ENCODE measurements at regions of chr3 and their contacts with region 1.

Region 1: DNA sequence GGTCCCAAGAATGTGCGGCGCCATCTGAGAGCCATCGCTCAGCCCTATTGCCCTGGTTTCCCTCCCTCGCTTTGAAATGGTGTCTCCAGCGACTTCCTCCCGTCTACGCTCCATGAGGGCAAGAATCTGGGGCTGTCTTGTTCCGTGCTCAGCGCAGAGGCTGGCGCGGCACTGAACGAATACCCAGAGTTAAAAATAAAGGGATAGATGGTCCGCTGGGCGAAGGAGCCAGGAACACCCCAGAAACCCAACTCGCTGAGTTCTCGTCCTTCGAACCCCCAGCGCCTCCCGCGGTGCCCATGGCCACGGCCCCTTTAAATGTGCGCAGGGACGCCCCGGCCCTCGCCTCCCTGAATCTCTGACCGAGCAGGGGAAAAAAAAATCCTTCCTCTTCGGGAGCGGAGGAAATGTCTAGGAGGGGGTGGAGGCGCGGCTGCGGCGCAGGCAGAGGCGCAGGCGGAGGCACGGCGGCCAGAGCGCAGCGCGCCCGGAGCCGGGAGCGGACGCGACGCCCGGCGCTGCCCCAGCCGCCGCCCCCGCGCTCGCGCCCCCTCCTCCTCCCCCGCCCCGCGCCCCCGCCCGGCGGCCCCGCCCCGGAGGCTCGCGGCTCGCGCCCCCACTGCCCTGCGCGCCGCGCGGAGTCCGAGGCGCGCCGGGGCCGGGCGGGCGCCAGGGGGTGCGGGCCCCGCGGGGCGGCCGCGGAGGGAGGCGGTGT is 8.5 kb upstream of the FGD5 start:
- DNase-seq: peak; percentile 81
- H3K4me3 ChIP-seq: peak overlapping the region; percentile 36 to 87 (median 77)
- H3K27ac ChIP-seq: peak overlapping the region; percentile 61
- H3K4me1 ChIP-seq: peaks cover 50% of the 10 kb centered on the region
- H3K27me3 ChIP-seq: no peaks in the 10 kb centered on the region
- CTCF ChIP-seq: no peak
- POLR2A ChIP-seq: no peak

Region 2: DNA sequence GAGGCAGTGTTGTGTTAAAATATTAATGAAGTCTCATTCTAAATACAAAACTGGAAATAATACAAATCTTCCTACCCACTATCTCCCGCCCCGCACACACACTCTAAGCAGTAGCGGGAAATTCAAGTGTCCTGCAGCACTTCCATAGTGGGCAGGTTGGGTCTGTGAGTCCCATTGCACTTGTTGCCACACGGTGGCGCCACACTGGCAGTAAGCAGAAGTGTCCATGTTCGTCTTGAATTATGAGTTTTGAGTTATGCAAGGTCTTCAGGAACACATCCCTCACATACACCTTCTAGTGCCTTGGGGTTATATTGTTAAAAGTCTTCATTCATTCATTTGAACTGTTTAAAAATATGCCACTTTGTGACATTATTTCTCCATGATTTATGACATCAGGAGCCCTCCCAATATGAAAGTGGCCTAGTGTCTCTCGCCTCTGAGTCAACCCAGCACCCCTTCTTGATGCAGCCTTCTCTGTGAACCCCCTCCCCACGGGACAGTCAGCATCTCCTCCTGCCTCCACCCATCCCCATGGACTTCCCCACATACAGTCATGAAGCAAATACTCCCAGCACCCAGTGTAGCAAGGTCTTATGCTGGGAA is 176.3 kb before region 1 on chr3:
- CTCF ChIA-PET with region 1: no interaction called
- POLR2A ChIA-PET with region 1: no interaction called
- dilution Hi-C with region 1: no loop called
- intact Hi-C with region 1: no loop called
- DNase-seq: peak; percentile 53
- H3K4me3 ChIP-seq: no peak overlapping the region
- H3K27ac ChIP-seq: peak overlapping the region; percentile 54
- H3K4me1 ChIP-seq: peaks cover 15% of the 10 kb centered on the region
- H3K27me3 ChIP-seq: peaks cover 0 to 2% of the 10 kb centered on the region in 2 experiments
- CTCF ChIP-seq: peak; percentile 76 to 83
- POLR2A ChIP-seq: no peak

Region 3: GRCh38 chr3:14822670-14823390 is 12.6 kb after region 1 on chr3:
- CTCF ChIA-PET with region 1: interaction called, 5 read pairs
- POLR2A ChIA-PET with region 1: no interaction called
- dilution Hi-C with region 1: no loop called
- intact Hi-C with region 1: loop called (anchors 1 kb)
- DNase-seq: peak; percentile 32
- H3K4me3 ChIP-seq: no peak overlapping the region
- H3K27ac ChIP-seq: peak overlapping the region; percentile 14
- H3K4me1 ChIP-seq: peaks cover 26% of the 10 kb centered on the region
- H3K27me3 ChIP-seq: no peaks in the 10 kb centered on the region
- CTCF ChIP-seq: no peak
- POLR2A ChIP-seq: no peak

Region 4: DNA sequence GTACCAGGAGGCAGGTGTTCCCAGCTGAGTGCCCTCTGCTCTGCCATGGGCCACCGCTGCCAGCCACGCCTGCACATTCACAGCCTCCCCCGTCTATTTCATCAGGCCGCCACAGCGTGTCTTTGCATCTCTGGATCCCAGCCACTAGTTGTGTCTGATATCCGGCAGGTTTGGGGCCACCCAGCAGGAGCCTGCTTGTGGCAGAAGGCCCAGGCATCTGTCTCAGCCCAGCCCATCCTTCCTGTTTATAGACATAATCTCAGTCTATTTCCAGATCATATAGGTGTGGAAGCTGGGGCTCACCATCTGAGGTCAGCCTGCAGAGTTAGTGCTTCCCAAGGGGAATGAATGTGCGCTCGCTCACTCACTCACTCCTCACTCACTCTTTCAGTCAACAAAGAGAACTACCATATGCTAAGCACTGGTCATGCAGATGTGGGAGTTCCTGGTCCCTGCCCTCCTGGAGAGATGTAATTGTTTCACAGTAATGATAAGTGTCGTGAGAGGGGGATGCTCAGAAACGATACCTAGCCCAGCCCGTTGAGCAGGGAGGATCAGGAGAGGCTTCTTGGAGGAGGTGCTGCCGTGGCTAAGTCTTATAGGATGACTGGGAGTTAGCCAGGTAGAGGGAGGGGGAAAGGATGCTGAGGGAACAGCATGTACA is 69.1 kb after region 1 on chr3:
- CTCF ChIA-PET with region 1: no interaction called
- POLR2A ChIA-PET with region 1: no interaction called
- dilution Hi-C with region 1: no loop called
- intact Hi-C with region 1: loop called (anchors 2 kb)
- DNase-seq: no peak
- H3K4me3 ChIP-seq: no peak overlapping the region
- H3K27ac ChIP-seq: no peak overlapping the region
- H3K4me1 ChIP-seq: peaks cover 13% of the 10 kb centered on the region
- H3K27me3 ChIP-seq: no peaks in the 10 kb centered on the region
- CTCF ChIP-seq: no peak
- POLR2A ChIP-seq: no peak

Measured in endothelial cell of umbilical vein (primary cell).